Panc1 (cell line): ENCODE measurements at regions of chr7 and their contacts with region 1.

Region 1: GRCh38 chr7:13532028-13532753 is 457.3 kb downstream of the ETV1 start:
- DNase-seq: no peak
- ATAC-seq: no peak
- H3K4me3 ChIP-seq: no peak overlapping the region
- H3K27ac ChIP-seq: no peak overlapping the region
- H3K4me1 ChIP-seq: no peaks in the 10 kb centered on the region
- H3K27me3 ChIP-seq: no peaks in the 10 kb centered on the region
- CTCF ChIP-seq: no peak

Region 2: GRCh38 chr7:13725591-13725990 is 193.4 kb after region 1 on chr7:
- CTCF ChIA-PET with region 1: no interaction called
- POLR2A ChIA-PET with region 1: no interaction called
- in situ Hi-C with region 1: no loop called
- intact Hi-C with region 1: loop called (anchors 5 kb)
- DNase-seq: no peak
- ATAC-seq: no peak
- H3K4me3 ChIP-seq: no peak overlapping the region
- H3K27ac ChIP-seq: no peak overlapping the region
- H3K4me1 ChIP-seq: no peaks in the 10 kb centered on the region
- H3K27me3 ChIP-seq: no peaks in the 10 kb centered on the region
- CTCF ChIP-seq: no peak; the same call in 1 of the 2 replicates

Region 3: DNA sequence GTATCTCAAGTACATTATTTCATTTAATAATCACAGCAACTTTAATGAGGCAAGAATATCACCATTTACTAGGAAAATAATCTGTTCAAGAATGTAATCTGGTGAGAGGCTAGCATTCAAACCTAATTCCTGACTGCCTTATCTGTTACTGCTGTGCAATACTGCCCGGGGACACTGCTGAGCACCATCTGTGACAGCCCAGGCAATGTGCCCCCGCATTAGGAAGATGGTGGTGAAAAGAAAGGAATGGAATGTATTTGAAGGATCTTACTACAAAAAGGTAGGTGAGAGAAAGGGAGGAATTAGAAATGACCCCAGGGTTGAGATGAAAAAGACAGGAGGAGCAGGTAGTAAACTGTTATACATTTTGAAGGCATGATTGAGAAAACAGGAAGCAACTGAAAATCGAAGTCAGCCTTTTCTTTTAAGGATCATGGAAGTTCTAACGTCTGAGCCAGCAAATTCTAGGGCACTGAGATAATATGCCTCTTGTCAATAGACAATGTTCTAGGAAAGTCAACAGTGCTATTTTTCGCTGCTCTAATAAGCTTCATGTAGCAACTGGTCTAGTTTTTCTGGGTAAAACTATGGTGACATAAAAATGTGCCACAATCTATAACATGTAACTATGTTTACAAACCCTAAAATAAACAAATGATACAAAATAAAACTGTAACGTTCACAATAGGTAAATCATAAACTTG is 366.9 kb after region 1 on chr7:
- CTCF ChIA-PET with region 1: no interaction called
- POLR2A ChIA-PET with region 1: no interaction called
- in situ Hi-C with region 1: no loop called
- intact Hi-C with region 1: loop called (anchors 10 kb)
- DNase-seq: no peak
- ATAC-seq: no peak
- H3K4me3 ChIP-seq: no peak overlapping the region
- H3K27ac ChIP-seq: no peak overlapping the region
- H3K4me1 ChIP-seq: no peaks in the 10 kb centered on the region
- H3K27me3 ChIP-seq: no peaks in the 10 kb centered on the region
- CTCF ChIP-seq: no peak